ENCODE measurements at regions of chr5 and their contacts with region 1.

Region 1: DNA sequence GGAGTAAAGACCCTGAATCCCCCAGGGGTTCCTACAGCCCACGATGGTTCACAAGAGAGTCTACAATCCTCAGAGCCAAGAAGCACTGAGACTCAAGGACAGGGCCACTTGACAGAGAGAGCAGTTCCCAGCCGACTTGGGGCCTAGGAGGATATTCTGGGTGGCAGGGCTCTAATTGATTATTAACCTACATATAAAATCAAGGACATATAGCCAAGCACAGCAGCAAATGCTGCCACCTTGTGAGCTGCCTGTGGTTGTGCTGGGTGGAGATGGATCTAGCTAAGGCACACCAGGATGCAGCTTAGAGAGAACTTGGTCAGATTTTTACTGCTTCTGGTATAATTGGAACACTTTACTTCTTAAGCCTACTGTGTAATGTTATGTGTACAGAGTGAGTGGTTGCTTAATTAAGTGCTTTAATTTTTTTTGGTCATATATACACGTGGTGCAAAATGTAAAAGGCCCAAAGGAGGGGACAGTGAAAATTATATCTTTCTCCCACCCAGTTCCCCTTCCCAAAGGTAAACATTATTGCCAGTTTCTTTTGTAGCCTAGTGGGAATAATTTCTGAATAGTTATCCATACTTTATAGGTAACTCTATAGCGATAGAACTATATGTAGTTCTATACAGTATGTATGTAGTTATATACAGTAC is 78.8 kb downstream of the F2RL2 start:
- DNase-seq: peak; percentile 79
- H3K4me3 Mint-ChIP-seq: peak overlapping the region; percentile 74
- H3K27ac Mint-ChIP-seq: peak overlapping the region; percentile 99
- H3K4me1 Mint-ChIP-seq: peaks cover 92% of the 10 kb centered on the region
- H3K27me3 Mint-ChIP-seq: no peaks in the 10 kb centered on the region

Region 2: GRCh38 chr5:76175051-76175666 is 369.2 kb before region 1 on chr5:
- CTCF ChIA-PET with region 1: interaction called, 5 read pairs
- POLR2A ChIA-PET with region 1: no interaction called
- intact Hi-C with region 1: loop called (anchors 2 kb)
- DNase-seq: peak; percentile 70
- H3K4me3 Mint-ChIP-seq: no peak overlapping the region
- H3K27ac Mint-ChIP-seq: no peak overlapping the region
- H3K4me1 Mint-ChIP-seq: peaks cover 34% of the 10 kb centered on the region
- H3K27me3 Mint-ChIP-seq: no peaks in the 10 kb centered on the region

Region 3: GRCh38 chr5:76331126-76331525 is 213.3 kb before region 1 on chr5:
- CTCF ChIA-PET with region 1: interaction called, 5 read pairs
- POLR2A ChIA-PET with region 1: interaction called, 5 read pairs
- intact Hi-C with region 1: loop called (anchors 2 kb)
- DNase-seq: peak; percentile 58
- H3K4me3 Mint-ChIP-seq: no peak overlapping the region
- H3K27ac Mint-ChIP-seq: peak overlapping the region; percentile 55
- H3K4me1 Mint-ChIP-seq: peaks cover 65% of the 10 kb centered on the region
- H3K27me3 Mint-ChIP-seq: no peaks in the 10 kb centered on the region

Region 4: DNA sequence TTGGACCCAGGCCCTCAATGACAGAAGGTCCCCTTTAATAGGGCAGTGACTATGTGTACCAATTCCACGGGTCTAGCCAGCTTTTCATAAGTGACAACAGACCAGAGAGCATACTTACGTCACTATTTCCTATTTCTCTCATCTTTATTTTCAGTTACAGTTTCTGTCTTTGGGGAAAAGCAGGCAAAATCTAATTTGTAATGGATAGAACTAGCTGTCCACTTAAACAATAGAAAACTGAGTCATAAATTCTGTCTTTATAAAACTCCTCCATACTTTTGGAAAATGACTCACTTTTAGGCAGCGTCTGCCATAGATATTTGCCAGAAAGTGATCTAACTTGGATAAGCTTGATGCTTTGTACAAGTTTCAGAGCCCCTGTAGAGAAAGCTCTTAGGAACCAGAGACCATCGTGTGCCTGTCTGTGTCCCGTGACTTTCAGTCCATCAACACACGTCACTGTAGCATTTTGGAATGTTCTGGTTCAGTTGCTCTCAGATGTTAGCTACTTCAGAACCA is 23.1 kb before region 1 on chr5:
- CTCF ChIA-PET with region 1: interaction called, 19 read pairs
- POLR2A ChIA-PET with region 1: interaction called, 19 read pairs
- intact Hi-C with region 1: loop called (anchors 1 kb)
- DNase-seq: no peak
- H3K4me3 Mint-ChIP-seq: peak overlapping the region; percentile 30
- H3K27ac Mint-ChIP-seq: peak overlapping the region; percentile 91
- H3K4me1 Mint-ChIP-seq: peaks cover 83% of the 10 kb centered on the region
- H3K27me3 Mint-ChIP-seq: no peaks in the 10 kb centered on the region

Region 5: DNA sequence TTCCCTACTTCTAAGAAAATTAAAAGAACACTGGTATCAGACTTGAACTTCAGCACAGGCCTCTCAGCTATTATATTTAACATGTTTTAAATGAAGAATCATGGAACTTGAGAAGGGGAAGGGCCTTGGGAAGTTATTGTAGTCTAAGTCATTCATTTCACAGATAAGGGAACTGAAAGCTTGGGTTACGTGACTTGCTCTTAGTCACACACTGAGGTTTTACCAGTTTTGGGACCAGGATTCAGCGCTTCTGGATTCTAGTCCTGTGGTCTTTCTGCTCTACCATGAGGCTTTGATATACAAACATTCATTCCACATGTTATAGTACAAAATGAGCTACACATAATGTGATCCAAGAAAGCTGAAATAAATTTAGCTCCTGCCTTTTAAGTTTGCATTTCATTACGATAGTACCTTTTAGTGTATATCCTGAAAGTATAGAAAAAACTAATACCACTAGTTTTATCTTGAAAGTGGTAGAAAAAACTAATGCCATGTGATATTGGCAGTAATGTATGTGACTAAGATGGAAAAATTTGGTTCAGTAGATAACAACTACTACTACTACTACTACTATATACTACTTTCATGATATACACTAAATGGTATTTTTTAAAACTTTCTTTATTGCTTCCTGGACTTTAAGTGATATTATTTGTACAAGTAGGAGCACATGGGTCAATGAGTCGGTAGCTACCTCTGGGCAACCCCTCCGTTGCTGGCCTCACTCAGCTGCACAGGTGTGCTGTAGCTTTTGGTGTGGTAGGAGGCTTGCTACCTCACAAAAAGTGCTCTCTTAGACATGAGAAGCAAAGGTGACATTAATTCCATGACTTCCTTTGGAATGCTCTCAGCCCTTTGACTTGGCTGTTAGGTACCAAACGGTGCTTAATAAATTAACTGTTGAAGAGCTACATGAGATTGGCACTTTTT is 38.1 kb after region 1 on chr5:
- CTCF ChIA-PET with region 1: interaction called, 44 read pairs
- POLR2A ChIA-PET with region 1: interaction called, 27 read pairs
- intact Hi-C with region 1: loop called (anchors 1 kb)
- DNase-seq: peak; percentile 59
- H3K4me3 Mint-ChIP-seq: no peak overlapping the region
- H3K27ac Mint-ChIP-seq: peak overlapping the region; percentile 66
- H3K4me1 Mint-ChIP-seq: peaks cover 27% of the 10 kb centered on the region
- H3K27me3 Mint-ChIP-seq: no peaks in the 10 kb centered on the region